ENCODE measurements at regions of chr1 and their contacts with region 1.

Region 1: DNA sequence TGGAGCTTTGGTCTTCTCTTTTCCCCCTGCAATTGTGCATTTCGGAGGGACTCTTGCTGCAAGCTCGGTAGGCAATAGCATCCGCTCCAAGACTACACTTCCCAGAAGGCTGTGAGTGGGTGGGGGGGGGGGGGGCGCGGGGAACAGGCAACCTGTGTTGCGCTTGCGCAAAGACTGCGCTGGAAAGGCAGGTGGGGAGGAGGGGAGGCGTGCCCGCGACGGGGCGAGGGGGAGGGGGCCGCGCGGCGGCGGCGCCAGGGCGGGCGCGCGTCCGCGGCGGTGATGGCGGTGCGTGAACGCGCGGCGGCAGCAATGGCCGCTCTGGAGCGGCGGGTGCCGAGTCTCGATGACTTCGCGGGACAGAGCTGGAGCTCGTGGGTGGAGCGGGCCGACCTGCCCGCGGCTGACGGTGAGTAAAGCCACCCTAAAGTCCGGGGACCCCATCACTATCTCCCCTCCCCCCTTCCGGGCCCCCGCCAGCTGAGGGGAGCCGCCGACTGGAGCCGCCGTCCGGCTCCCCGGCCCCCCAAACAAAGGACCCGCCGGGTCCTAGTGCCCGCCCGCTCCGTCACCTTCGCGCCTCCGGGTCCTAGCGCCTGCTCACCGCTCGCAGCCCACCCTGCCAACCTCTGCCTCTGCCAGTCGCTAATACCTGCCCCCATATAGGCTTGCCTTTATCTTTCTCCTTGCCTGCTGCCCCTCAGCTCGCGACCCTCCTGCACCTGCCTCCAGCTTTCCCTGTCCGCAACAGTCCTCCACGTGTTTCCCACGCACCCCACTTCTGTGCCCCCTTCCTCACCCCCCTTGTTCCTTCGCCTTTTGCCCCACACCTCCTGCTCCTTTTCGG is at the start of gene ATXN7L2:
- DNase-seq: peak; percentile 93
- H3K4me3 Mint-ChIP-seq: peak within 1 kb of the TSS; percentile 95
- H3K27ac Mint-ChIP-seq: peak within 1 kb of the TSS; percentile 85
- H3K4me1 Mint-ChIP-seq: peaks cover 24% of the 10 kb centered on the region
- H3K27me3 Mint-ChIP-seq: no peaks in the 10 kb centered on the region
- total RNA-seq, gene ATXN7L2: 15.2 to 16.4 TPM

Region 2: GRCh38 chr1:109248797-109249642 is 234.9 kb before region 1 on chr1 and contains the start of gene CELSR2:
- CTCF ChIA-PET with region 1: no interaction called
- intact Hi-C with region 1: loop called (anchors 10 kb)
- DNase-seq: peak; percentile 60
- H3K4me3 Mint-ChIP-seq: peak within 1 kb of the TSS; percentile 49
- H3K27ac Mint-ChIP-seq: no peak within 1 kb of the TSS
- H3K4me1 Mint-ChIP-seq: peaks cover 3% of the 10 kb centered on the region
- H3K27me3 Mint-ChIP-seq: no peaks in the 10 kb centered on the region
- total RNA-seq, gene CELSR2: 1.1 to 1.2 TPM

Region 3: DNA sequence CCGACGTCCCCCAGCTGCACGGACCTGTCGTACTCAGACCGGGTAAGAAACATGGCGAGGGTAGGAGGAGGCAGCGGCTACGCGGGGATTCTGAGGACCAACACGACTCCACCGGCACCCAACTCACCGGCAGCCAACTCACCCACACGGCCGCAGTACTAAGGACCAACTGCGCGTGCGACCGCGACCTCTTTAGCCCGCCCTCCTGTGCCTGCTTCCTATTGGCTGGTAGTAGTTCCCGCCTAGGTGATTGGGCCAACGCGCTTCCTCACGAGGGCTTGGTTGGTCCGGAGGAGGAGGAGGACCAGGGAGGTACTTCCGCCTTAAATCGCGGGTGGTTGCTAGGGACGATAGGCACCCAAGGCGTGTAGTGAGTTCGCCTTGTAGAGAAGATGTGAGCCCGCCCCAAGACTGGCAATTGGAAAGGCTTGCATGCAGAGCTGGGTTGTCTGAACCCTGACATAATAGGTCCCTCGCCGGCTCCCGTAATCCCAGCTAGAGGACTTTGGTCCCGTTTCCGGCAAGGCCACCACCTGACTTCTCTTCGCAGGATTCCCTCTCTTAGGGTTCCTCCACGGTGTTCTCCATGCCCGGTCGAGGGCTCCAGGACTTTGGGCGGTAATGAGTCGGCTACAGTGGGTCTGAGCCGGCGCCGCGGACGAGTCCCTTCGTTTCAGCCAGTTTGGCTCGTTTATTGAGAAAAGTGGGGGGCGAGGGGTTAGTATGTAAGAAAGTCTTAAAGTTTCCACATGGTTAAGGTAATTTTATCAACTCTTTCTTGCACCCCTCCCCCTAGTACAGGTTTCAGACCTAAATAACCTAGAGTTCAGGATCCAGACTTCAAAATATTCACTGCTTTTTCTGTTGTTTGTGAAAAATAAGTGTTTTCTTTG is 57.4 kb before region 1 on chr1 and contains the start of gene PSMA5:
- CTCF ChIA-PET with region 1: interaction called, 3 read pairs
- intact Hi-C with region 1: loop called (anchors 1 kb)
- DNase-seq: peak; percentile 98
- H3K4me3 Mint-ChIP-seq: peak within 1 kb of the TSS; percentile 94
- H3K27ac Mint-ChIP-seq: peak within 1 kb of the TSS; percentile 97
- H3K4me1 Mint-ChIP-seq: peaks cover 33% of the 10 kb centered on the region
- H3K27me3 Mint-ChIP-seq: no peaks in the 10 kb centered on the region
- total RNA-seq, gene PSMA5: 181 to 202 TPM

Region 4: DNA sequence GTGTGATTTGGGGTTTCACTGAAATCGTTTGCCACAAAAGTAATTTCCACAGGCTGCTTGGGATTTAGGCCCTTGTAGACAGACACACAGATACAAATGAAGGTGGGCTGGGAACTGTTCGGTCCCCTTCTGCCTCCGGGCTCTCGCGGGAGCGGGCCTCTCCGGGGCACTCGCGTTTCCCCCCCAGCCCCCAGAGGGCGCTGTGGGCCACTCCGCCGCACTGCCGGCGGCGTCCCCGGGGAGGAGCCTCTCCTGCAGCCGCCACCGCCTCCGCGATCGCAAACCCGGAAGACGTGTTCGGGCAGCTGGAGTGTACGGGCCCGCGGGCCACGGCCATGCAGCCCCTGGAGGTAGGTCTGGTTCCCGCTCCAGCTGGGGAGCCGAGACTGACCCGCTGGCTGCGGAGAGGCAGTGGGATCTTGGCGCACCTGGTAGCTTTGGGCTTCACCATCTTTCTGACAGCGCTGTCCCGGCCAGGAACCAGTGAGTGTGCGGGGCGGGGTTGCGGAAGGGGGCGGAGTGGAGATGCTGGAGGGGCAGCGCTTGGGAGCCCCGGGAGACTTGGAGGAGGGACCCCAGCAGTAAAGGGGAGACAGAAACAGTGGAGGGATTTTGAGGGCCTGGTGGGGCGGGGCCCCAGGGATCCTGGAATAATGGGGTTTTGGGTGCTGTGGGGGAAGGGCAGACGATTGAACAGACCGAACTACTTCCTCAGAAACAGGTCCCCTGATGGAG is 10.1 kb after region 1 on chr1 and contains the start of gene CYB561D1:
- CTCF ChIA-PET with region 1: interaction called, 375 read pairs
- intact Hi-C with region 1: loop called (anchors 1 kb)
- DNase-seq: peak; percentile 90
- H3K4me3 Mint-ChIP-seq: peak within 1 kb of the TSS; percentile 98
- H3K27ac Mint-ChIP-seq: peak within 1 kb of the TSS; percentile 92
- H3K4me1 Mint-ChIP-seq: peaks cover 54% of the 10 kb centered on the region
- H3K27me3 Mint-ChIP-seq: no peaks in the 10 kb centered on the region
- total RNA-seq, gene CYB561D1: 6.6 to 8.5 TPM

Region 5: GRCh38 chr1:109620841-109621286 is 137.0 kb after region 1 on chr1:
- CTCF ChIA-PET with region 1: no interaction called
- intact Hi-C with region 1: loop called (anchors 1 kb)
- DNase-seq: peak; percentile 98
- H3K4me3 Mint-ChIP-seq: peak overlapping the region; percentile 93
- H3K27ac Mint-ChIP-seq: peak overlapping the region; percentile 91
- H3K4me1 Mint-ChIP-seq: peaks cover 57% of the 10 kb centered on the region
- H3K27me3 Mint-ChIP-seq: no peaks in the 10 kb centered on the region

Measured in activated naive CD4-positive, alpha-beta T cell treated with anti-CD3 and anti-CD28 coated beads for 36 hours (primary cell).